ENCODE measurements at regions of chr1 and their contacts with region 1.

Region 1: DNA sequence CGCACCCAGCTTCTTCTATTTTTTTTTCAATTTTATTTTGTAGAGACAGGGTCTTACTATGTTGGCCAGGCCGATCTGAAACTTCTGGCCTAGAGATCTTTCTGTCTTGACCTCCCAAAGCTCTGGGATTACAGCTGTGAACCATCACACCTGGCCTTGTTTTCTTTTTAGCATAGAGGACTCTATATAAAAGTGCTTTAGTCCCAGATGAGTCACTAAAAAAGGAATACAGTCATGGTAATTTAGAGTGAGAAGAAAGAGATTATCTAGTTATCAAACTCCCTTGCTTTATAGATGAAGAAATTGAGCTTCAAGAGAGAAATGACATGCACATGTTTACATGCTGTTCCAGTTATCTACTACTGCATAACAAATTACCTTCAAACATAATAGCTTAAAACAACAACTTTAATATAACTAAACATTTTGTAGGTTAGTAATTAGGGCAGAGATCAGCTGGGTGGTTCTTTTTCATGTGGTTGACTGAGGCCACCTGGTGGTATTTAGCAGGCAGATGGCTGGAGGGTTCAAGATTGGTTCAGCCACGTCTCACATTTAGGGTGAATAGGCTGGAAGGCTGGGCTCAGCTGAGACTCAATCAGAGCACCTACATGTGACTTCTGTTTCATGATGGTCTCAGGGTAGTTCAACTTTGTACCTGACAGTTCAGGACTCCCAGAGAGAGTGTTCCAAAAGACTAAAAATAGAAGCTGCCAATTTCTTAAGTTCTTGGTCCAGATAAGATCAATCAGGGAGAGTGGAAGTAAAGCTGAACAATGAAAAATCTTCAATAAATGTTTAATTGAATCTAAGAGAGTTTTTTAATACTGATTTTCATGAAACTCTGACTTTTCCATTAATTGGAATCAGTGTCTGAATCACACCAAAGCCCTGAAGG is 16.9 kb upstream of the MTF2 start:
- DNase-seq: peak; percentile 67
- H3K4me3 Mint-ChIP-seq: no peak overlapping the region
- H3K27ac Mint-ChIP-seq: no peak overlapping the region
- H3K4me1 Mint-ChIP-seq: no peaks in the 10 kb centered on the region
- H3K27me3 Mint-ChIP-seq: no peaks in the 10 kb centered on the region

Region 2: GRCh38 chr1:92968138-92969032 is 93.8 kb before region 1 on chr1:
- CTCF ChIA-PET with region 1: interaction called, 5 read pairs
- intact Hi-C with region 1: loop called (anchors 1 kb)
- DNase-seq: peak; percentile 49
- H3K4me3 Mint-ChIP-seq: no peak overlapping the region
- H3K27ac Mint-ChIP-seq: no peak overlapping the region
- H3K4me1 Mint-ChIP-seq: peaks cover 30% of the 10 kb centered on the region
- H3K27me3 Mint-ChIP-seq: no peaks in the 10 kb centered on the region

Region 3: GRCh38 chr1:93021539-93022134 is 40.5 kb before region 1 on chr1:
- CTCF ChIA-PET with region 1: interaction called, 93 read pairs
- intact Hi-C with region 1: loop called (anchors 1 kb)
- DNase-seq: no peak
- H3K4me3 Mint-ChIP-seq: no peak overlapping the region
- H3K27ac Mint-ChIP-seq: no peak overlapping the region
- H3K4me1 Mint-ChIP-seq: no peaks in the 10 kb centered on the region
- H3K27me3 Mint-ChIP-seq: peaks cover 1% of the 10 kb centered on the region

Region 4: GRCh38 chr1:93042187-93043056 is 19.7 kb before region 1 on chr1:
- CTCF ChIA-PET with region 1: interaction called, 11 read pairs
- intact Hi-C with region 1: no loop called
- DNase-seq: peak; percentile 38
- H3K4me3 Mint-ChIP-seq: peak overlapping the region; percentile 64
- H3K27ac Mint-ChIP-seq: peak overlapping the region; percentile 85
- H3K4me1 Mint-ChIP-seq: peaks cover 26% of the 10 kb centered on the region
- H3K27me3 Mint-ChIP-seq: no peaks in the 10 kb centered on the region

Region 5: GRCh38 chr1:93102142-93102541 is 40.0 kb after region 1 on chr1:
- CTCF ChIA-PET with region 1: no interaction called
- intact Hi-C with region 1: no loop called
- DNase-seq: no peak
- H3K4me3 Mint-ChIP-seq: no peak overlapping the region
- H3K27ac Mint-ChIP-seq: no peak overlapping the region
- H3K4me1 Mint-ChIP-seq: peaks cover 40% of the 10 kb centered on the region
- H3K27me3 Mint-ChIP-seq: no peaks in the 10 kb centered on the region